A549 (cell line): ENCODE measurements at regions of chr10 and their contacts with region 1.

Region 1: DNA sequence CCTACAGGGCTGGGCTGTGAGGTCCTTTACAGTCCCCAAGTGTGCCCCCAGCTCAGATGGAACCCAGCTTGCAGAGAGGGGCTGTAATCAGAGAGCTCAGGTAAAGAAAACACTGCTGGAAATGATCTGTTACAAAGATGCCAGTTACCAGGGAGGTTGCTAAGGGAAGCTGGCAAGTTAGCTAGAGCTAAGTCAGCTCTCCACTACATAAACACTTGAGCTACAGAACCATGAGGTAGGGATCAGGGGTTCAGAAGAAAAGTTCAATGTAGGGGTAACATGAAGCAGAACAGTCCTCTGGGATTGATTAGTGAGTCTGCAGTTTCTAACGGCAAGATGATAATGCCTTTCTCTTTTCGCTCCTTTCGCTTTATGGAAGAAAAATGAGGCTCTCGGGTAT is 53.1 kb upstream of the TM9SF3 start:
- DNase-seq: no peak
- ATAC-seq: no peak
- H3K4me3 ChIP-seq: no peak overlapping the region
- H3K27ac ChIP-seq: no peak overlapping the region
- H3K4me1 ChIP-seq: no peaks in the 10 kb centered on the region
- CTCF ChIP-seq: no peak
- EP300 ChIP-seq: no peak
- POLR2A ChIP-seq: no peak
- RAD21 ChIP-seq: no peak

Region 2: GRCh38 chr10:96618653-96619052 is 21.2 kb before region 1 on chr10:
- CTCF ChIA-PET with region 1: interaction called, 15 read pairs
- POLR2A ChIA-PET with region 1: no interaction called
- DNase-seq: no peak
- ATAC-seq: no peak
- H3K4me3 ChIP-seq: no peak overlapping the region
- H3K27ac ChIP-seq: no peak overlapping the region
- H3K4me1 ChIP-seq: peaks cover 12% of the 10 kb centered on the region
- CTCF ChIP-seq: no peak
- EP300 ChIP-seq: no peak
- POLR2A ChIP-seq: no peak
- RAD21 ChIP-seq: no peak

Region 3: GRCh38 chr10:96651998-96652431 is 12.1 kb after region 1 on chr10:
- CTCF ChIA-PET with region 1: interaction called, 20 read pairs
- POLR2A ChIA-PET with region 1: no interaction called
- DNase-seq: no peak
- ATAC-seq: no peak
- H3K4me3 ChIP-seq: no peak overlapping the region
- H3K27ac ChIP-seq: no peak overlapping the region
- H3K4me1 ChIP-seq: no peaks in the 10 kb centered on the region
- CTCF ChIP-seq: no peak
- EP300 ChIP-seq: no peak
- POLR2A ChIP-seq: no peak
- RAD21 ChIP-seq: no peak

Region 4: DNA sequence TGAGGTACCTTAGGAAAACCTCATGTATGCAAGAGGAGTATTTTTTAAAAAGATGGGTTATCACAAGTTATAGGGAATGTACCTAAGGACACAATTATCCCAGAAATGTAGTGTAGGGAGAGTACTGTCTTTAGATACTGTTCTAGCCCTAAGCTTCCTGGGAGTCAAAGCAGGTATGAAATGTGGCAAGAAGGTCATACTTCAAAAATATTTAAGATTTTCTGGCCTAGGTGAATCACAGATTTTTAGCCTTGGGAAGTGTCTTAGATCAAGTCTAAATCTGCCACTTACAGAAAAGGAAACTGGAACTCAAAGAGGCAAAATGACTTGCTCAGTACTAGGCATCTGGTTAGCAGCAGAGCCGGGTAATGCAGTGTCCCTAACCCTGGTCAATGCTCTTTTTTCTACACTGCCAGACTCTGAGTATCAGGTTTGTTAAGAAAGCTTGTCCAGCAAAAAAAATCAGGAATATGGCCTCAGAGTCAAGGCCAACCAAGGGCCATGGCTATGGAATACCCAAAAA is 66.5 kb after region 1 on chr10:
- CTCF ChIA-PET with region 1: interaction called, 12 read pairs
- POLR2A ChIA-PET with region 1: no interaction called
- DNase-seq: no peak
- ATAC-seq: no peak
- H3K4me3 ChIP-seq: no peak overlapping the region
- H3K27ac ChIP-seq: no peak overlapping the region
- H3K4me1 ChIP-seq: no peaks in the 10 kb centered on the region
- CTCF ChIP-seq: no peak
- EP300 ChIP-seq: no peak
- POLR2A ChIP-seq: no peak
- RAD21 ChIP-seq: no peak

Region 5: GRCh38 chr10:96718304-96718990 is 78.5 kb after region 1 on chr10:
- CTCF ChIA-PET with region 1: interaction called, 19 read pairs
- POLR2A ChIA-PET with region 1: no interaction called
- DNase-seq: no peak
- ATAC-seq: no peak
- H3K4me3 ChIP-seq: no peak overlapping the region
- H3K27ac ChIP-seq: no peak overlapping the region
- H3K4me1 ChIP-seq: no peaks in the 10 kb centered on the region
- CTCF ChIP-seq: no peak
- EP300 ChIP-seq: no peak
- POLR2A ChIP-seq: no peak
- RAD21 ChIP-seq: no peak

Region 6: GRCh38 chr10:96826438-96826837 is 186.5 kb after region 1 on chr10:
- CTCF ChIA-PET with region 1: interaction called, 15 read pairs
- POLR2A ChIA-PET with region 1: no interaction called
- DNase-seq: no peak
- ATAC-seq: peak; percentile 12 to 30; a peak in 2 of 6 replicates
- H3K4me3 ChIP-seq: no peak overlapping the region
- H3K27ac ChIP-seq: no peak overlapping the region
- H3K4me1 ChIP-seq: peaks cover 10% of the 10 kb centered on the region
- CTCF ChIP-seq: no peak
- EP300 ChIP-seq: no peak
- POLR2A ChIP-seq: no peak
- RAD21 ChIP-seq: no peak

Region 7: GRCh38 chr10:98587156-98587837 is 1947.4 kb after region 1 on chr10:
- CTCF ChIA-PET with region 1: no interaction called
- POLR2A ChIA-PET with region 1: no interaction called
- DNase-seq: no peak
- ATAC-seq: 0 out of 6 replicates have a peak, but pooled peaks of 1 of the 2 experiments have one; percentile 20
- H3K4me3 ChIP-seq: no peak overlapping the region
- H3K27ac ChIP-seq: no peak overlapping the region
- H3K4me1 ChIP-seq: 0 out of 3 replicates have a peak, but pooled peaks cover 6% of the 10 kb centered on the region
- CTCF ChIP-seq: no peak
- EP300 ChIP-seq: no peak
- POLR2A ChIP-seq: no peak
- RAD21 ChIP-seq: no peak